ENCODE measurements at regions of chr1 and their contacts with region 1.

Region 1: GRCh38 chr1:23344111-23344986 is at the start of gene HNRNPR:
- DNase-seq: peak; percentile 98
- H3K27ac ChIP-seq: peak within 1 kb of the TSS; percentile 97
- CTCF ChIP-seq: no peak

Region 2: GRCh38 chr1:23367791-23368561 is 23.6 kb after region 1 on chr1:
- CTCF ChIA-PET with region 1: interaction called, 4 read pairs
- POLR2A ChIA-PET with region 1: interaction called, 24 read pairs
- DNase-seq: peak; percentile 99
- H3K27ac ChIP-seq: peak overlapping the region; percentile 97
- CTCF ChIP-seq: no peak

Region 3: DNA sequence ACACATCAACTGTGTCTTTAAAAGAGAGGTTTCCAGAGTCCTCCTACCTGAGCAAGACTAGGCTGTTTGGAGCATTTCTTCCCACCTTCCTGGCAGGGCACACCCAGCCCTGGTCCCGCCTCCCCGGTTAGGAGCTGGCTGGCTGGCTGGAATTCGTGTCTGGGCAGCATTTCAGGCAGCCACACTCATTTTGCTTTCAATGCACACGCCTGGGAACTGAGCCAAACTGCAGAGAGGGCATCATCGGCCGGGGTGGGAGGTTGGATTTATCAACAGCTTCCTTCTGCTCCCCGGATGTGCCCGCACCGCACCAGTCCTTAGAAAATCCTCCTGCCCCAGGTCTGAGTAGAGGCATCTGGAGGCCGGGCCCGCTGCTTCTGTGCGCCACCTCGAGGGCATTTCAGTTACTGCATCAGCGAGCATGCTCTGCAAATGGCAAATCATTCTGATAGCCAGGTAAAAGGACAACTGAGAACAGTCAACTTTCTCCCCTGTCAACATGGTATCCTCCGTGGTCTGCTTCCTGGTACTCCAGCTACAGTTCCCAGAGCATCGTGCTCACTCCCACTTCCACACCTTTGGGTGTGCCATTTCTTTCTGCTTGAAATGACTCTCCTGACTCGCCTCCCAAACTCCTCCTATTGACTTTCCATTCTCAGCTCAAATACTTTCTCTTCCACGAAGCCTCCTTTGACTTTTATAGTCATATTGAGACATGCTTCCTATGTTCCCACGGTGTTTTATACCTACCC is 59.6 kb after region 1 on chr1:
- CTCF ChIA-PET with region 1: interaction called, 12 read pairs
- POLR2A ChIA-PET with region 1: no interaction called
- DNase-seq: peak; percentile 98
- H3K27ac ChIP-seq: peak overlapping the region; percentile 87
- CTCF ChIP-seq: peak; percentile 97

Region 4: GRCh38 chr1:23539698-23540266 is 195.4 kb after region 1 on chr1:
- CTCF ChIA-PET with region 1: interaction called, 10 read pairs
- POLR2A ChIA-PET with region 1: no interaction called
- DNase-seq: peak; percentile 89
- H3K27ac ChIP-seq: no peak overlapping the region
- CTCF ChIP-seq: peak; percentile 95